SK-N-SH (cell line): ENCODE measurements at regions of chrX and their contacts with region 1.

Region 1: DNA sequence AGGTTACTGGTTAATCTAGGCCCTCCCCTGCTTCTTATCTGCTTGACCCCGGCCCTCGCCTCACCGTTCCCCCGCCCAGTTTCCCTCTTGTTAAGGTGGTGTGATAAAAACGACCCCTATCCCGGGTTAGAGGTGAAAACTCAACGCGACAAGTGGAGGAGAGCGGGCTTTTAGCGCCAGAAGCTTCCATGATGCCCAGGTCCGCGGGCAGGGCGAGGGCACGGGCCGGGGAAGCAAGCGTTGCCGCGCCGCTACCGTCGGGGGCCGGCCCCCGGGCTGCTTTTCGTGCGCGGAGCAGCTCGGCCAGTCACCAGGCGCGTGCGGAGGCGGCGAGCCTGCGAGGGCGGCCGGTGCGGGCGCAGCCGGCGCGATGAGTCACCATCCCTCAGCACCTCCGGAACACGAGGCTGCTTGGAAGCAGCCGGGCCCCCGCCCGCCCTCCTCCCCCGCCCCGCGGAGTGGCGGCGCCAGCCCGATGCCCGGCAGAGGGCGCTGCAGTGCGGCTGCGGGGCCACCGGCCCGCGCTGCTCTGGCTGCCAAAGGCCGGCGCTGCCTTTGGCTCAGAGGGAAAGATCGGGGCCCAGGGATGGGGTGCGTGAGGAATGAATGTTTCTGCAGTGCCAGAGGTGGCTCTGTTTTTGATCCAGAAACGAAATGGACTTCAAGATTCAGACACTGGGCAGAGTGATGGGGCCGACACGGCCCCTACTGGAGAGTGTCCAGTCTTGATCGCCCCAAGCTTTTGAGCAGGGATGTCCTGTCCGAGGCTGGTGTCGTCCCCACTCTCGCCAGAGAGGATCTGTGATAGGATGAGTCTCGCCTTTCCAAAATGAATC is 107.8 kb downstream of the NHSL2 start:
- DNase-seq: peak; percentile 97
- H3K4me3 ChIP-seq: no peak overlapping the region
- H3K27ac ChIP-seq: no peak overlapping the region
- H3K4me1 ChIP-seq: peaks cover 3 to 7% of the 10 kb centered on the region in 2 experiments; a peak in 1 of 4 replicates
- H3K27me3 ChIP-seq: peaks cover 19% of the 10 kb centered on the region; the same call in 1 of the 2 replicates
- CTCF ChIP-seq: peak; percentile 70
- EP300 ChIP-seq: peak in 1 of 2 experiments; percentile 15; a peak in 1 of 4 replicates
- RAD21 ChIP-seq: peak; percentile 72

Region 2: GRCh38 chrX:71492231-71493065 is 526.0 kb before region 1 on chrX:
- CTCF ChIA-PET with region 1: no interaction called
- POLR2A ChIA-PET with region 1: no interaction called
- DNase-seq: peak; percentile 15
- H3K4me3 ChIP-seq: no peak overlapping the region; a peak in 1 of 4 replicates
- H3K27ac ChIP-seq: no peak overlapping the region
- H3K4me1 ChIP-seq: no peaks in the 10 kb centered on the region
- H3K27me3 ChIP-seq: no peaks in the 10 kb centered on the region; the same call in 1 of the 2 replicates
- CTCF ChIP-seq: no peak
- EP300 ChIP-seq: no peak
- RAD21 ChIP-seq: no peak

Region 3: DNA sequence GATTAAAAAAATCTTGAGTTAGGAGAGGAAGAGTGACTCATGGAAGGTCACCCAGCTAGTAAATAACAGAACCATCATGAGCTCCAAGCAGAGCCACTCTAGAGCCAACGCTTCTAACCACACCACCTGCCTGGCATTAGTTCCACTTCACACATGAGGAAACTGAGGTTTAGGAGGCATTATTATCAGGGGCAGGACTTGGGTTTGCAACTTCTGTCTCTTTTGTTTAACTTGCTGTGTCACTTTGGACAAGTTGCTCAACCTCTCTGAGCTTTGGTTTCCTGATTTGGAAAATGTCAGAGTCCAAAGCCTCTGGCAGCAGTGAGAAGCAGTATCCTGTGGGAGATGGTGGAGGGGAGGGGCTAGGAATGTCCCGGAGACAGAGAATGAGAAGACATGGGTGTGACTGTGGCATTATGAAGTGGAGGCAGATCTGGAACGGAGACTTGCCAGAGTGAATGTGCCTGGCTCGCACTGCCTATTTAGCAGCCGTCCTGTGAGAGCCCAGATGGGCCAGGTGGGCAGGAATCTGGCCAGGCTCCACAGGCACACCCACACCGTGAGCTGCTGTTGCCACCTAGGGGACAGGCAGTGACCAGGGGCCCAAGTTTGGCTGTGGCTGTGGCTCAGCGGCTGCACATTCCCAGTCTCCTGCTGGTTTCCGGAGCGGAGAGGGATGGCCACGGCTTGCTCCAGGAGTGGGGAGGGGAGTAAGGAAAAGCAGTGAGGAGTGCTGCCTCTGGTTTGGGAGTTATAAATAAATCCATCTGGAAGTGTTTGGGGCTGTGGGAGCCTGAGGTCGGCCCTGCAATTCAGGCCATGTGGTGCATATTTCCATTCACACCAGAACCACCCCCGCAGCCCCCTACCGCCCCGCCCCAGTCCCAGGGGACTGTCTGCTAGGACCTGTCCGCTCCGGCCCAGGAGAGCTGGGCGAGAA is 14.4 kb before region 1 on chrX:
- CTCF ChIA-PET with region 1: interaction called, 57 read pairs
- POLR2A ChIA-PET with region 1: no interaction called
- DNase-seq: peak; percentile 48
- H3K4me3 ChIP-seq: no peak overlapping the region
- H3K27ac ChIP-seq: no peak overlapping the region; a peak in 1 of 4 replicates
- H3K4me1 ChIP-seq: peaks cover 0 to 8% of the 10 kb centered on the region in 2 experiments; a peak in 1 of 4 replicates
- H3K27me3 ChIP-seq: peaks cover 32% of the 10 kb centered on the region; the same call in 1 of the 2 replicates
- CTCF ChIP-seq: no peak
- EP300 ChIP-seq: no peak
- RAD21 ChIP-seq: peak; percentile 38; the same call in 1 of the 2 replicates

Region 4: GRCh38 chrX:72045552-72046277 is 27.2 kb after region 1 on chrX:
- CTCF ChIA-PET with region 1: interaction called, 39 read pairs
- POLR2A ChIA-PET with region 1: no interaction called
- DNase-seq: peak; percentile 66
- H3K4me3 ChIP-seq: no peak overlapping the region
- H3K27ac ChIP-seq: peak overlapping the region; percentile 25 to 99; a peak in 3 of 4 replicates
- H3K4me1 ChIP-seq: peaks cover 8 to 74% of the 10 kb centered on the region in 2 experiments; a peak in 3 of 4 replicates
- H3K27me3 ChIP-seq: peaks cover 3% of the 10 kb centered on the region; the same call in 1 of the 2 replicates
- CTCF ChIP-seq: no peak
- EP300 ChIP-seq: no peak
- RAD21 ChIP-seq: no peak

Region 5: DNA sequence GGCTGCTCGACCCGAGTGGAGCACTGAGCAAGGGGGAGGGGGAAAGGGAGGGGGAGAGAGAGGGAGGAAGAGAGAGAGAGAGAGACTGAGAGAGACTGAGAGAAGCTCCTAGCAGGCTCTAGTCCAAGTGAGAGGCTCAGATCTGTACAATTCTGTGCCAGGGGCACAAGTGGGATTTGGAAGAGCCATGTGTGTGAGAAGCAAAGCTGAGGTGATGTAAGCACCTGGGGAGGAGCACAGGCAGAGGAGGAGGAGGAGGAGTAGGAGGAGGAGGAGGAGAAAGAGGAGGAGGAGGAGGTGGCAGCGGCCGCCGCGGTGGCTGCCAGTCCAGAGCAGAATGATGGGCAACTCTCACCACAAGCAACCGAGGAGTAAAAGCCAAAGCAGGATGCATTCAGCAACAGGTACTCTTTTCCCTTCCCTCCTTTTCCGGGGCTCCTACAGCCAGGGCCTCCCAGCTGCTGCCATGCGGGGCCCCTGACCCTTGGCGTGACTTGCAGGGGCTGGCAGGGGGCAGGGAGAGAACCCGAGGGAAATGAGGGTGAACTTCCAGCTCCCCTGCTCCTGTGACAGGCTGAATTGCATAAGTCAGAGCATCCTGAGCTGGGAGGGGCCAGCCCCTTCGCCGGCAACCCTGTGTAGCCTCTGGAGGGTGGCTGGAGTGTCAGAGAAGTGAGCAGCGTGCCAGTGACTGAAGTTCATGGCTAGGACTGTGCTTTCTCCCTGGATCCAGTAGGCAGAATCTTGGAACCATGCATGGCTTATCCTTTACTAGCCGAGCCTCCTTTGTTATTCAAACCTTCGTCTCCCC is 51.1 kb after region 1 on chrX:
- CTCF ChIA-PET with region 1: interaction called, 17 read pairs
- POLR2A ChIA-PET with region 1: interaction called, 4 read pairs
- DNase-seq: no peak
- H3K4me3 ChIP-seq: peak overlapping the region in 1 of 2 experiments; percentile 40; a peak in 2 of 4 replicates
- H3K27ac ChIP-seq: peak overlapping the region in 1 of 2 experiments; percentile 45; a peak in 2 of 4 replicates
- H3K4me1 ChIP-seq: peaks cover 0 to 30% of the 10 kb centered on the region in 2 experiments; a peak in 1 of 4 replicates
- H3K27me3 ChIP-seq: peaks cover 67% of the 10 kb centered on the region
- CTCF ChIP-seq: no peak
- EP300 ChIP-seq: no peak
- RAD21 ChIP-seq: no peak

Region 6: GRCh38 chrX:72094894-72095293 is 76.4 kb after region 1 on chrX:
- CTCF ChIA-PET with region 1: interaction called, 22 read pairs
- POLR2A ChIA-PET with region 1: no interaction called
- DNase-seq: peak; percentile 90
- H3K4me3 ChIP-seq: no peak overlapping the region; a peak in 1 of 4 replicates
- H3K27ac ChIP-seq: peak overlapping the region in 1 of 2 experiments; percentile 96; a peak in 2 of 4 replicates
- H3K4me1 ChIP-seq: peaks cover 0 to 20% of the 10 kb centered on the region in 2 experiments; a peak in 2 of 4 replicates
- H3K27me3 ChIP-seq: no peaks in the 10 kb centered on the region; the same call in 1 of the 2 replicates
- CTCF ChIP-seq: no peak
- EP300 ChIP-seq: peak in 1 of 2 experiments; percentile 54; a peak in 1 of 4 replicates
- RAD21 ChIP-seq: no peak; the same call in 1 of the 2 replicates

Region 7: GRCh38 chrX:72159769-72160168 is 141.3 kb after region 1 on chrX:
- CTCF ChIA-PET with region 1: no interaction called
- POLR2A ChIA-PET with region 1: no interaction called
- DNase-seq: no peak
- H3K4me3 ChIP-seq: no peak overlapping the region
- H3K27ac ChIP-seq: no peak overlapping the region
- H3K4me1 ChIP-seq: no peaks in the 10 kb centered on the region
- H3K27me3 ChIP-seq: no peaks in the 10 kb centered on the region; the same call in 1 of the 2 replicates
- CTCF ChIP-seq: no peak
- EP300 ChIP-seq: no peak
- RAD21 ChIP-seq: no peak